Caco-2 (cell line): ENCODE measurements at regions of chr3 and their contacts with region 1.

Region 1: DNA sequence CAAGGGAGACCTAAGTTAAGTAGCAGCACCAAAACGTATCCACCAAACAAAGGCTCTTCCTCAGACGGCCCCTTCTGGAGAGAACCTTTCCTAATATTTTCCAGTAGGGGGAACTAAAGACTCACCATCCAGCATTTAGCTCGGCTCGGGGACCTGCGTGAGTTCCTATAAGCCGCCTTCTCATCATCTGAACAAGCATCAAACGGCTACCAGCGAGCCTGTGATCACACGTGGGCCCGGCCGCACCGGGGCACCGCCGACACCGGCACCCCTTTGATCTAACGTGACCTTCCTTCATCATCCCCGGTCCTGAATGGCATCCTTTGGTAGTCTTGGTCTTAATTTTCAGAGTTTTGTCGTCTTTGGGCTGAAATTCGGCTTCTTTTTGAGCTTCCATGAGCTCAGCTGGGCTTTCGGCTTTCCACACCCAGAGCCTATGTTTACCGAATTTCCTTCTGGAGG is 1.4 kb upstream of the ROBO2 start:
- DNase-seq: peak; percentile 67 to 68
- H3K4me3 ChIP-seq: no peak overlapping the region
- H3K4me3 Mint-ChIP-seq: peak overlapping the region; percentile 75
- H3K27ac Mint-ChIP-seq: no peak overlapping the region
- H3K4me1 ChIP-seq: peaks cover 5% of the 10 kb centered on the region
- H3K4me1 Mint-ChIP-seq: peaks cover 7% of the 10 kb centered on the region
- H3K27me3 ChIP-seq: peaks cover 3% of the 10 kb centered on the region
- H3K27me3 Mint-ChIP-seq: peaks cover 23% of the 10 kb centered on the region
- CTCF ChIP-seq: peak; percentile 62 to 65

Region 2: GRCh38 chr3:76679541-76679940 is 359.0 kb before region 1 on chr3:
- CTCF ChIA-PET with region 1: interaction called, 4 read pairs
- POLR2A ChIA-PET with region 1: no interaction called
- intact Hi-C with region 1: loop called (anchors 1 kb)
- DNase-seq: no peak
- H3K4me3 ChIP-seq: no peak overlapping the region
- H3K4me3 Mint-ChIP-seq: no peak overlapping the region
- H3K27ac Mint-ChIP-seq: no peak overlapping the region
- H3K4me1 ChIP-seq: no peaks in the 10 kb centered on the region
- H3K4me1 Mint-ChIP-seq: no peaks in the 10 kb centered on the region
- H3K27me3 ChIP-seq: no peaks in the 10 kb centered on the region
- H3K27me3 Mint-ChIP-seq: no peaks in the 10 kb centered on the region
- CTCF ChIP-seq: no peak

Region 3: GRCh38 chr3:76753599-76753998 is 284.9 kb before region 1 on chr3:
- CTCF ChIA-PET with region 1: interaction called, 3 read pairs
- POLR2A ChIA-PET with region 1: no interaction called
- intact Hi-C with region 1: loop called (anchors 1 kb)
- DNase-seq: no peak
- H3K4me3 ChIP-seq: no peak overlapping the region
- H3K4me3 Mint-ChIP-seq: no peak overlapping the region
- H3K27ac Mint-ChIP-seq: no peak overlapping the region
- H3K4me1 ChIP-seq: no peaks in the 10 kb centered on the region
- H3K4me1 Mint-ChIP-seq: peaks cover 6% of the 10 kb centered on the region
- H3K27me3 ChIP-seq: no peaks in the 10 kb centered on the region
- H3K27me3 Mint-ChIP-seq: no peaks in the 10 kb centered on the region
- CTCF ChIP-seq: peak in 1 of 2 experiments; percentile 43

Region 4: GRCh38 chr3:77134769-77135168 is 96.3 kb after region 1 on chr3:
- CTCF ChIA-PET with region 1: interaction called, 3 read pairs
- POLR2A ChIA-PET with region 1: no interaction called
- intact Hi-C with region 1: loop called (anchors 5 kb)
- DNase-seq: no peak
- H3K4me3 ChIP-seq: no peak overlapping the region
- H3K4me3 Mint-ChIP-seq: no peak overlapping the region
- H3K27ac Mint-ChIP-seq: no peak overlapping the region
- H3K4me1 ChIP-seq: no peaks in the 10 kb centered on the region
- H3K4me1 Mint-ChIP-seq: no peaks in the 10 kb centered on the region
- H3K27me3 ChIP-seq: no peaks in the 10 kb centered on the region
- H3K27me3 Mint-ChIP-seq: no peaks in the 10 kb centered on the region
- CTCF ChIP-seq: no peak

Region 5: GRCh38 chr3:77169823-77170222 is 131.3 kb after region 1 on chr3:
- CTCF ChIA-PET with region 1: no interaction called
- POLR2A ChIA-PET with region 1: no interaction called
- intact Hi-C with region 1: no loop called
- DNase-seq: no peak
- H3K4me3 ChIP-seq: no peak overlapping the region
- H3K4me3 Mint-ChIP-seq: no peak overlapping the region
- H3K27ac Mint-ChIP-seq: no peak overlapping the region
- H3K4me1 ChIP-seq: no peaks in the 10 kb centered on the region
- H3K4me1 Mint-ChIP-seq: no peaks in the 10 kb centered on the region
- H3K27me3 ChIP-seq: no peaks in the 10 kb centered on the region
- H3K27me3 Mint-ChIP-seq: no peaks in the 10 kb centered on the region
- CTCF ChIP-seq: no peak

Region 6: DNA sequence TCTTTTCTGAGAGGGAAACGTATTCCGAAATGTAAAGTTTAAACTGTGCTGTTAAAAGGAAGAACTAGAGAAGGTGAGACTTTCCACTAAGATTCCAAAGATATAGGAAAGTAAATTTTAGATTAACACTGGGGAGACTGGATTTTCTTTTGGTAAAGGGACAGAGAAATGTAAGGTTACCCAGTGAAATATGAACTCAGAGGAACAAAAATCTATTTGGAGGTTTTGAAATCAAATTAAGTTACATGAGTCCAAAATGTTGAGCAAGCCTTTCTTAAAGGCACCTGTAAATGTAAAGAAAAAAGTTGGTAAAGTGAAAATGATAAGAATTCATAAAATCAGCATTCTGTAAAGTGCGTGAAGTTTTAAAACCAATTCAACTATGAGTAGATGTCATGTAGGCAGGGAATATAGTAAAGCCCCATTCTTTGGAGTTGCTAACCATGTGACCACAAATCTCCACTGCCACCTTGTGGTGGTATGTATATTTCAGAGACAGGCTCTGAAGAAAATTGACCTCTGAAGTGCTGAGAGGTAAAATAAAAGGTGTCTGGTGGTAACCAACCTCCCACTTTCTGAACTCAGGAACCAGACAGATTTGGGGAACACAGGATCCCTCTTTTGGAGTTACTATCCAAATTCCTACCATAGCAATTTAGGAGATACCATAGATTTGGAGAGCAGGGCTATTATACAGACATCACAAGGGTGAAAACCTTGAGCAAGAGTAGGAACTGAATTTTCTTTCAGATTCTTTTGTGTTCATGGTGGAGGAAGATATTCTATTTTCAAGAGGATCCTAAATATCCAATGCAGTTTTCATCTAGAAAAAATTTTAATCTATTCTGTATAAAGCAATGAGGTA is 216.7 kb after region 1 on chr3:
- CTCF ChIA-PET with region 1: interaction called, 5 read pairs
- POLR2A ChIA-PET with region 1: no interaction called
- intact Hi-C with region 1: loop called (anchors 1 kb)
- DNase-seq: peak; percentile 49 to 69
- H3K4me3 ChIP-seq: no peak overlapping the region
- H3K4me3 Mint-ChIP-seq: no peak overlapping the region
- H3K27ac Mint-ChIP-seq: no peak overlapping the region
- H3K4me1 ChIP-seq: no peaks in the 10 kb centered on the region
- H3K4me1 Mint-ChIP-seq: no peaks in the 10 kb centered on the region
- H3K27me3 ChIP-seq: no peaks in the 10 kb centered on the region
- H3K27me3 Mint-ChIP-seq: peaks cover 3% of the 10 kb centered on the region
- CTCF ChIP-seq: peak; percentile 53 to 70

Region 7: GRCh38 chr3:77320514-77320913 is 282.0 kb after region 1 on chr3:
- CTCF ChIA-PET with region 1: interaction called, 4 read pairs
- POLR2A ChIA-PET with region 1: no interaction called
- intact Hi-C with region 1: loop called (anchors 1 kb)
- DNase-seq: peak in 1 of 2 experiments; percentile 9
- H3K4me3 ChIP-seq: no peak overlapping the region
- H3K4me3 Mint-ChIP-seq: no peak overlapping the region
- H3K27ac Mint-ChIP-seq: no peak overlapping the region
- H3K4me1 ChIP-seq: no peaks in the 10 kb centered on the region
- H3K4me1 Mint-ChIP-seq: peaks cover 7% of the 10 kb centered on the region
- H3K27me3 ChIP-seq: no peaks in the 10 kb centered on the region
- H3K27me3 Mint-ChIP-seq: no peaks in the 10 kb centered on the region
- CTCF ChIP-seq: peak; percentile 46 to 52